Breast epithelium (tissue), 4 donors: ENCODE measurements at regions of chr20 and their contacts with region 1.

Region 1: DNA sequence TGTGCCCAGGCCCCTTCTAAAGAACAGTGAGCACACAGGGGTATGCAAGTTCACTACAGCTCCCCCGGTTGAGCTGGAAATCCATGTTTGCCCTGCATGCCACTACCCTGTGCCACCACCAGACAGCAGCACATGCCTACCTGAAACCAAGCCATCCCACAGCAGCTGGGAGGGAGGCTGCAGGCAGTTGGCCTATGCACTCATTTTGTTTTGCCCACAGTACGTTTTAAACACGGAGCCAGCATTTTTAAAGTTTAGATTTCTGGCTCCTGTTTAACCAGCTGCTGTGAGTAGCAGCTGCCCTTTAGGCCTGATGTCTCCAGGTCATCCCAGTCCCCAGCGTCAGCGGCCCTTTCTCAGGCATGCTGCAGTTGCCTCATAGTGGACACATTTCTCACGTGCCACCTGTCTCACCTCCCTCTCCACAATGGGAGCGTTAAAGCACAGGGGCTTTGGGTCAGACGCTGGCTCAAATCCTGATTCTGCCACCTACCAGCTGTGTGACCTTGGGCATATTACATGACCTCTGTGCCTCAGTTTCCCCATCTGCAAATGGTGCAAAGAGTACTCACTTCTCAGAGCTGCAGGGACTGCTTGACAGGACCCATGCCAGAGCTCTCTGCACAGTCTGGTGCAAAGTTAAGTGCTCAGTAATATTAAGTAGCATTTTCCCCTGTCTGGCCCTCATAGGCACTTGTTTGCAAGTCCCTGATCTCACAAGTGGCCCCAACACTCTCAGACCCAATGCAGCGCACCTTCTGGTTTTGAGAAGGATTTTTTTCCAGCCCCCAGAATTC is 8.1 kb upstream of the UBE2V1 start:
- DNase-seq: peak in 1 of 2 donors; percentile 59
- H3K4me3 ChIP-seq: no peak overlapping the region
- H3K27ac ChIP-seq: no peak overlapping the region
- H3K4me1 ChIP-seq: peaks cover 0 to 4% of the 10 kb centered on the region in 2 donors
- H3K27me3 ChIP-seq: no peaks in the 10 kb centered on the region
- CTCF ChIP-seq: peak; percentile 76 to 92 (median 88)
- POLR2A ChIP-seq: no peak

Region 2: GRCh38 chr20:50165684-50166554 is 44.8 kb after region 1 on chr20:
- intact Hi-C with region 1: loop called (anchors 5 kb)
- DNase-seq: peak; percentile 95 to 99
- H3K4me3 ChIP-seq: peak overlapping the region; percentile 9 to 60 (median 35)
- H3K27ac ChIP-seq: peak overlapping the region; percentile 90 to 93
- H3K4me1 ChIP-seq: peaks cover 2 to 4% of the 10 kb centered on the region in 2 donors
- H3K27me3 ChIP-seq: no peaks in the 10 kb centered on the region
- CTCF ChIP-seq: no peak
- POLR2A ChIP-seq: no peak